ENCODE measurements at regions of chr1 and their contacts with region 1.

Region 1: DNA sequence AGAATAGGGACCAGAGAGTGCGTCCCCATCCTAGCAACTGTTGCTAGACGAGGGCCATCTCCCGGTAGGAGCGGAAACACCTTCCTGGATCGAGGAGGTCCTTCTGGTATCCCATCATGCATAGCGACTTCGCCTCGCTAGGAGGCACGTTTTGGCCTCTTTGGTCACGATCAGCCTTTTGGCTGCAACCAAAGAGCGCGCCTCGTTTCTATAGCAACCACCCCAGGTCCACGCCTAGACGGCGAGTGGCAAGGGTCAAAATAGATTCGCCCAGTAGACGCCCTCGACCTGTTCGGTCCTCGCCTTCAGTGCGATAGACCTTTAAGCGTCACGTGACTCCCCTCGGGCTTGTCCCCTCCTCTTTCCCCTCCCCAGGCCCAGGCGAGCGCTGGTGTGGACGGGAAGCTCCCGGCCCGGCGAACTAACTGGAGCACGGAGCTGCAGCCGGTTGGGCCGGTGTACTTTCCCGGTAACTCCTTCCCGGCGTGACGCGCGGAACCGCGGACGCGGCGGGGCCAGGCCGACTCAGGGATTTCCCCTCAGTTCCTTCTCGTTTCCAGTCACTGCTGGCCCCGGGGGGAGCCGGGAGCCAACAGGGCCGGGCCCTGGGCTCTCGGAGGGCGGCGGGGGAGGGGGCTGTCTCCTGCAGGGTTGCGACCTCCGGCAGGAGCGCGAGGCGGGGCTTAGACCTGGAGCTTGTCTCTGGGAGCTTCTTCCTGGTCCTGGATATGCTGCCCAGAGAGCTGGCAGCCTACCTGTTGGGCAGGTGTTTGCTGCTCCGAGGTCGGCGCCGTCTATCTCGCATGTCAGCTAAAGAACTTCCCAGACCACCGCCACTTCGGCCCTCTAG is at the start of gene DNAJC16:
- DNase-seq: peak; percentile 99
- H3K4me3 Mint-ChIP-seq: peak within 1 kb of the TSS; percentile 99
- H3K27ac Mint-ChIP-seq: peak within 1 kb of the TSS; percentile 100
- H3K4me1 Mint-ChIP-seq: peaks cover 43% of the 10 kb centered on the region
- H3K27me3 Mint-ChIP-seq: no peaks in the 10 kb centered on the region
- total RNA-seq, gene DNAJC16: 15.4 and 16.3 TPM in 2 replicates

Region 2: DNA sequence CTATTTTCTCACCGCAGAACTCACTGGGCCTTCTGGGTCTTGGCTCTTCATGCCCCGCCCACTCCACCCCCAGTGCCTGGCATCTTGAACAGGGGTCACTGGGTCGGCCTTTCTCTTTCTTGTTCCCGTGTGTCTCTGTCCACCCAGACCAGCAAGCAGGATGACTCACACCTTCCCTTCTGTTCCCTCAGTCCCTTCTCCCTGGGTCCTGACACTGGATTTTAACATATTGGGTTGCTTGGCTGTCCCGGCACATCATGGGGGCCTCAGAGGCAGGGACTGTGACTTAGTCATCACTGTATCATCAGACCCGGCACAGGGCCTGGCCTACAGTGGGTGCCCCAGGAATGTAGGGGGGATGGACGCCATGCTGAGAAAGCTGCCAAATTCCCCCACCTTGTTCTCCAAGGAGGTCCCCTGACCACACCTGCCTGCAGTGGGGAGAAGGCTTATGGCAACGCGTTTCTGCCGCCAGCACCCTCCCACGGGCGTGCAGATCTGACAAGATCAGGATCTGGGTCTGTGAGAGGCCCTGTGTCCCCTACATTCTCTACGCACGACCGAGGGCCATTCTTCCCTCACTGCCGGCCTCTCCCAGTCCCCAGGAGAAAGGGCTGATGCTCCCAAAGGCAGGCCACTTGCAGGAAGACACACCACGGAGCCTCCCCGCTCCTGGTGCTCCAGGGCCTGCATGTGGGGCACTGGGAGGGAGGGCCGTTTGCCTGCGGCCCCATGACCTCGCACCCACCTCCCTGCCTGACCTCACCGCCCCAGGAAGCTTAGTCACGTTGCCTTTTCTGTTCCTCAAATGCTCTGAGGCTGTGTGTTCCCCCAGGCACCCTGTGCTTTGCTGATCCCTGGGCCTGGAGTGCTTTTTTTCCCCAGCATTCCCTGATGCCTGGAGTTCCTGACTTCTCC is 530.3 kb before region 1 on chr1:
- intact Hi-C with region 1: no loop called
- DNase-seq: no peak
- H3K4me3 Mint-ChIP-seq: no peak overlapping the region
- H3K27ac Mint-ChIP-seq: no peak overlapping the region
- H3K4me1 Mint-ChIP-seq: no peaks in the 10 kb centered on the region
- H3K27me3 Mint-ChIP-seq: no peaks in the 10 kb centered on the region

Region 3: GRCh38 chr1:15409388-15410222 is 117.1 kb before region 1 on chr1 and contains the start of gene EFHD2:
- intact Hi-C with region 1: loop called (anchors 2 kb)
- DNase-seq: peak; percentile 96
- H3K4me3 Mint-ChIP-seq: peak within 1 kb of the TSS; percentile 96
- H3K27ac Mint-ChIP-seq: peak within 1 kb of the TSS; percentile 91
- H3K4me1 Mint-ChIP-seq: peaks cover 35% of the 10 kb centered on the region
- H3K27me3 Mint-ChIP-seq: peaks cover 32% of the 10 kb centered on the region
- total RNA-seq, gene EFHD2: 90.5 and 92.3 TPM in 2 replicates

Region 4: GRCh38 chr1:15465674-15466073 is 61.0 kb before region 1 on chr1:
- intact Hi-C with region 1: no loop called
- DNase-seq: no peak
- H3K4me3 Mint-ChIP-seq: no peak overlapping the region
- H3K27ac Mint-ChIP-seq: no peak overlapping the region
- H3K4me1 Mint-ChIP-seq: no peaks in the 10 kb centered on the region
- H3K27me3 Mint-ChIP-seq: peaks cover 2% of the 10 kb centered on the region

Region 5: DNA sequence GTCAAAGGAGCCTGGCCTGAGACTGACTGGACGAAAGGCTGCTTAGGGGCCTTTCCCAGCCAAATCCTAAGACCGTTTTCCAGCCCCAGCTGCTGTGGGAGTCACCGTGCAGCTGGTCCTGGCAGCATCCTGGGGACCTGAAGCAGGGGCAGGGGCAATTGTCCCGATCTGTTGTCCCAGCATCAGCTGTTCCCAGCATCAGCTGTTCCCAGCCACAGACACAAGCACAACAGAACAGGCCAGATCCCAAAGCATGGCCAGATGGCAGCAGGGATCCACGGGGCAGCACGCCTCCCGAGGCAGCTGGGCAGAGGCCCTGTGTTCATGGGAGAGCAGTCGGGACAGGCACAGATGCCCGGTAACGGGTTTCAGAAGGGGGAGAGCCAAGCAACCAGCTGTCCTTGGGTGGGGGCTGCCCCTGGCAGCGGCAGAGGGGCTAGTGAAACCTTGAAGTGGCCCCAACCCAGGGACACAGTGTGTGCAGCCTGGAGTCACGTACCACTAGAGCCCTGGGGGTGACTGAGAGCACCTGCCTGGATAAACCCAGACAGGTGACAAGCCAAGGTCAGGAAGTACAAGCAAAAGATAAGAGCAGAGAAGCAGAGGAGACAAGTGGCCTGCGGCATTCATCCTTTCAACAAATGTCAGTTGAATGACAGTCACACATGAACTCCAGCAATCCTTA is 37.5 kb before region 1 on chr1:
- intact Hi-C with region 1: no loop called
- DNase-seq: no peak
- H3K4me3 Mint-ChIP-seq: no peak overlapping the region
- H3K27ac Mint-ChIP-seq: no peak overlapping the region
- H3K4me1 Mint-ChIP-seq: peaks cover 5% of the 10 kb centered on the region
- H3K27me3 Mint-ChIP-seq: no peaks in the 10 kb centered on the region

Region 6: GRCh38 chr1:15568387-15569073 is 41.8 kb after region 1 on chr1:
- intact Hi-C with region 1: no loop called
- DNase-seq: no peak
- H3K4me3 Mint-ChIP-seq: no peak overlapping the region
- H3K27ac Mint-ChIP-seq: no peak overlapping the region
- H3K4me1 Mint-ChIP-seq: peaks cover 2% of the 10 kb centered on the region
- H3K27me3 Mint-ChIP-seq: no peaks in the 10 kb centered on the region

Region 7: GRCh38 chr1:15578921-15579682 is 52.4 kb after region 1 on chr1:
- intact Hi-C with region 1: loop called (anchors 2 kb)
- DNase-seq: peak; percentile 83
- H3K4me3 Mint-ChIP-seq: peak overlapping the region; percentile 76
- H3K27ac Mint-ChIP-seq: peak overlapping the region; percentile 96
- H3K4me1 Mint-ChIP-seq: peaks cover 36% of the 10 kb centered on the region
- H3K27me3 Mint-ChIP-seq: no peaks in the 10 kb centered on the region

Region 8: GRCh38 chr1:15684468-15685291 is 158.0 kb after region 1 on chr1:
- intact Hi-C with region 1: loop called (anchors 5 kb)
- DNase-seq: peak; percentile 82
- H3K4me3 Mint-ChIP-seq: peak overlapping the region; percentile 92
- H3K27ac Mint-ChIP-seq: peak overlapping the region; percentile 85
- H3K4me1 Mint-ChIP-seq: peaks cover 35% of the 10 kb centered on the region
- H3K27me3 Mint-ChIP-seq: no peaks in the 10 kb centered on the region

Region 9: GRCh38 chr1:16206547-16207317 is 680.0 kb after region 1 on chr1:
- intact Hi-C with region 1: loop called (anchors 2 kb)
- DNase-seq: peak; percentile 98
- H3K4me3 Mint-ChIP-seq: peak overlapping the region; percentile 89
- H3K27ac Mint-ChIP-seq: peak overlapping the region; percentile 97
- H3K4me1 Mint-ChIP-seq: peaks cover 6% of the 10 kb centered on the region
- H3K27me3 Mint-ChIP-seq: peaks cover 3% of the 10 kb centered on the region

Measured in activated CD4-positive, alpha-beta T cell treated with anti-CD3 and anti-CD28 coated beads, Interleukin-2, amount 10 ng/mL, durations not matched to agents 24 days and 14 days (primary cell).